Endothelial cell of umbilical vein (primary cell): ENCODE measurements at regions of chr5 and their contacts with region 1.

Region 1: GRCh38 chr5:172216345-172216744 is 22.4 kb downstream of the EFCAB9 start:
- DNase-seq: no peak
- H3K4me3 ChIP-seq: no peak overlapping the region
- H3K27ac ChIP-seq: no peak overlapping the region
- H3K4me1 ChIP-seq: no peaks in the 10 kb centered on the region
- H3K27me3 ChIP-seq: no peaks in the 10 kb centered on the region
- CTCF ChIP-seq: no peak
- POLR2A ChIP-seq: no peak

Region 2: DNA sequence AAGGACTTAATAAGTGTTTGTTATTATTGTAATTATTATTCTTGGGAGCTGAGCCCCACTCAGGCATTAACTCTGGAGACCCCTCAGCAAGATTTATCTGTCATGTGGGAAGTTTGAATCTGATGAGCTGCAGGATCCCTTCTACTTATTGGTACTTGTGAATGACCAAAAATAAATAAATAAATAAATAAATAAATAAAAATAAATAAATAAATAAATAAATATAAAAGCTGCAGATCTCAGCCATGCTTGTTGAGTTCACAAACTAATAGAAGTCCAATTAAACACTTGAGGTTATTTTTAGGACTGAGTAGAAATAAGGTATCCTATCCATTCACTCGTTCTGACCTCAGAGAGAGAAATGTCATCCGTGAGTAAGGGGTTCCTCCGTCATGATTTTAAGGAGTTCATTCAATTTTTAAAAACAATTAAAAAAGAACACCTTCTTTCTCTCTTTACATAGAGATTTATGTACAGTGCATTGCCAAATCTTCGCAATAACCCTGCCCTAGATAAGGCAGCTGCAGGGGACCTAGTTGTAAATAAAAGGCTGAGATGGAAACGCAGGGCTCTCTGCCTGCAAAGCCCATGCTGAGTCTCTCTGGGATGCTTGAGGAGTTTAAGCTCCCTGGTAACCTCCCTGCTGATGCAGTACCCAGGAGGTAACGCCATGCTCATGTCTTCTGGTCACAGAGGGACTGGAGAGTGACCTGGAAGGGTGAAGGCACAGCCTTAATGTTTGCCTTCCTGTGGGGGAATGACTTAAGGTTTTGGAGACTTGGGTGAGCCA is 21.2 kb before region 1 on chr5:
- CTCF ChIA-PET with region 1: no interaction called
- POLR2A ChIA-PET with region 1: interaction called, 12 read pairs
- dilution Hi-C with region 1: no loop called
- intact Hi-C with region 1: no loop called
- DNase-seq: no peak
- H3K4me3 ChIP-seq: no peak overlapping the region
- H3K27ac ChIP-seq: no peak overlapping the region
- H3K4me1 ChIP-seq: no peaks in the 10 kb centered on the region
- H3K27me3 ChIP-seq: no peaks in the 10 kb centered on the region
- CTCF ChIP-seq: no peak
- POLR2A ChIP-seq: no peak